Tibial artery (tissue), 4 donors: ENCODE measurements at regions of chr3 and their contacts with region 1.

Region 1: DNA sequence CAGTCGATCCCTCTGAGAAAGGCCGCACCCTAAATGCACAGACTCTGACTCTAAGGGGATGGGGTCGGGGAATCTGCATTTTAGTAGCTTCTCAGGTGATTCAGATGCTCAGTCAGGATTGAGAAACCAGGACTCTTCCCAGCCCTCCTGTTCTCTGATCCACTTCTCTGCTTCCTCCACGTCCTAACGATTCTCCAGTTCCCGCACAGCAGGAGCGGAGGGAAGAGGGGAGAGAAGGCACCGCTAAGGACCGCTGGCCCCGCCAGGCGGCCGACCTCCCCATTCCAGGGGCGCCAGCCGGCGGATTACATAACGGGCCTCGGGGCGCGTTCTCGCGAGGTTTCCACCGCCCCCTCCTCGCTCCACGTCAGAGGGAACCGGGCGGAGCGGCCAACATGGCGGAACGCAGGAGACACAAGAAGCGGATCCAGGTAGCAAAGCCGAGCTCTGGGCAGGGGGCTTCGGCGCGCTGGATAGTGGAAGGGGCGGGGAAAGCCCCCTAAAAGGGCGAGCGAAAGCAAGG is at the start of gene SEC62:
- DNase-seq: peak; percentile 90 to 96
- H3K4me3 ChIP-seq: peak within 1 kb of the TSS; percentile 74 to 78
- H3K27ac ChIP-seq: peak within 1 kb of the TSS; percentile 85 to 93
- H3K4me1 ChIP-seq: peaks cover 0 to 39% (median 16%) of the 10 kb centered on the region in 4 donors
- H3K27me3 ChIP-seq: no peaks in the 10 kb centered on the region
- CTCF ChIP-seq: peak; percentile 23 to 35

Region 2: DNA sequence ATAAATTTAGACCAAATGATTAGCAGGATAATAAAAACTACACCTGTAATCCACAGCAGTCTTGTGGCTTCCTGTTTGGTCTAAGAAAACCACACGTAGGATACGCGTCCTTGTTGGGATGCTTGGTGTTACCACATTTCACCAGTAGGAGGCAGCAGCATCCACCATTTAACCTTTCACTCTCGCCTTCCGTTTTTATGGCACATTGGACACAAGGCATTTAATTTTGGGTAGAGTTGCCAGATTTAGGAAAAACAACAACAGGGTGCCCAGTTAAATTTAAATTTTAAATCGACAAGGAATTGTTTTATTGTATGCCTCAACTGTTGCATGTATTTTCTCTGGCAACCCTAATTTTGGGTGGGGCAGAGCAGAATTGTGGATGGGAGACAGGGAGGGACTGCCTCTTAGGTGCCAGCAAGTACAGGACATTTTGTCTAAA is 103.0 kb before region 1 on chr3:
- intact Hi-C with region 1: loop called (anchors 10 kb)
- DNase-seq: peak; percentile 64 to 70
- H3K4me3 ChIP-seq: no peak overlapping the region
- H3K27ac ChIP-seq: no peak overlapping the region
- H3K4me1 ChIP-seq: peaks cover 0 to 4% (median 0%) of the 10 kb centered on the region in 4 donors
- H3K27me3 ChIP-seq: no peaks in the 10 kb centered on the region
- CTCF ChIP-seq: peak; percentile 74 to 84

Region 3: GRCh38 chr3:170055209-170055608 is 88.7 kb after region 1 on chr3:
- intact Hi-C with region 1: no loop called
- DNase-seq: no peak
- H3K4me3 ChIP-seq: no peak overlapping the region
- H3K27ac ChIP-seq: no peak overlapping the region
- H3K4me1 ChIP-seq: no peaks in the 10 kb centered on the region
- H3K27me3 ChIP-seq: no peaks in the 10 kb centered on the region
- CTCF ChIP-seq: no peak

Region 4: DNA sequence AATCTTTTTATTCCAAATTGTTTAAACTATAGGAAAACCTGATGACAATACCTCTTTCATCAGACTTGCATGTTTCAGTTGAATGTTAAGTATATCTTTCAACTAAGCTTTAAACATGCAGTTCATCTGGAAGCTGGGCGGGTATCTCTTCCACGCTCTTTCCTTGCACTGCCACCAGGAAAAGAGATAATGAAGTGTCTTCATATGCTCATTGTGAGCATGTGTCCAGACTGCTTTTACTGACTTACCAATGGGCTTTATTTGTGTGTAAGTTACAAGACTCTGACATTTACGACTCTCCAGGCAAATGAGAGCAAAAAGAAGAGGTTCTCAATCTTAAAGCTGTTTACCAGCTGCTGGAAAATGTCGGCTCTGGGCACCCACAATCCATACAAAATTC is 1929.4 kb after region 1 on chr3:
- intact Hi-C with region 1: loop called (anchors 5 kb)
- DNase-seq: no peak
- H3K4me3 ChIP-seq: no peak overlapping the region
- H3K27ac ChIP-seq: no peak overlapping the region
- H3K4me1 ChIP-seq: no peaks in the 10 kb centered on the region
- H3K27me3 ChIP-seq: no peaks in the 10 kb centered on the region
- CTCF ChIP-seq: no peak